B cell (primary cell): ENCODE measurements at regions of chr3 and their contacts with region 1.

Region 1: DNA sequence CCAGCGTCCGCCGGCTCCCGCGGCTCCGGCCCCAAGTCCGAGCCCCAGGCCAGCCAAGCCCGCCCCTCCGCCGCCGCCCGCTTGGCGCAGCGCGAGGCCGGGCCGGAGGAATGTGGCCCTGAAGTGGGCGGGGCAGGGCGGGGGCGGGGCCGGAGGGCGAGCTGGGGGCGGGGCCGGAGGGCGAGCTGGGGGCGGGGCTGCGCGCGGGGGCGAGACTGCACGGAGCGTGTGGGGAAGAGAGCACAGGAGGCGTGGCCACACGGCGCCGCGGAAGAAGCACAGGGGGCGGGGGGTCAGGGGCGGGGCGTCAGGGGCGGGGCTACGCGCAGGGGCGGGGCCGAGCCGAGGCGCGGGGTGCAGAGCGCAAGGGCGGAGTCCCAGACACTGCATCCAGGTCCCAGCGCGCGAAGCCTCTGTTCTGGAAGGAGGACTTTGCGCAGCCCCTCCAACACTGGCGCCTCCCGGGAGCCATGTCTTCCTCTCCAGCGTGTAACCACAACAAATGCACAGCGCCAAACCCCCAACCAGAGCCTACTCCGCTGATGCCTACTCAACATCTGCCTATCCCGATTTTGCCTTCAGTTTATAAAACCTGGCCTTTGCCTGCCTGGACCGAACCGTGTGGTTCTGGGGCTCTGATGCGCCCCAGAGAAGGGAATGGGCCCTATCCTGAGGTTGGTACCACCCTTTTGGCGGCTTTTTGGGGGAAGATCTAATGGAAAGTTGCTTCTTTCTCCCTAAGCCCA is 105.5 kb downstream of the IQSEC1 start:
- DNase-seq: peak; percentile 91
- ATAC-seq: peak; percentile 98
- H3K4me3 ChIP-seq: peak overlapping the region in 4 of 5 experiments; percentile 16 to 61 (median 44)
- H3K4me3 Mint-ChIP-seq: peak overlapping the region; percentile 86
- H3K27ac ChIP-seq: peak overlapping the region in 1 of 2 donors; percentile 11
- H3K27ac Mint-ChIP-seq: peak overlapping the region; percentile 85
- H3K4me1 ChIP-seq: peaks cover 55 to 78% of the 10 kb centered on the region in 2 donors
- H3K4me1 Mint-ChIP-seq: peaks cover 77% of the 10 kb centered on the region
- H3K27me3 ChIP-seq: no peaks in the 10 kb centered on the region
- H3K27me3 Mint-ChIP-seq: no peaks in the 10 kb centered on the region
- CTCF ChIP-seq: no peak

Region 2: DNA sequence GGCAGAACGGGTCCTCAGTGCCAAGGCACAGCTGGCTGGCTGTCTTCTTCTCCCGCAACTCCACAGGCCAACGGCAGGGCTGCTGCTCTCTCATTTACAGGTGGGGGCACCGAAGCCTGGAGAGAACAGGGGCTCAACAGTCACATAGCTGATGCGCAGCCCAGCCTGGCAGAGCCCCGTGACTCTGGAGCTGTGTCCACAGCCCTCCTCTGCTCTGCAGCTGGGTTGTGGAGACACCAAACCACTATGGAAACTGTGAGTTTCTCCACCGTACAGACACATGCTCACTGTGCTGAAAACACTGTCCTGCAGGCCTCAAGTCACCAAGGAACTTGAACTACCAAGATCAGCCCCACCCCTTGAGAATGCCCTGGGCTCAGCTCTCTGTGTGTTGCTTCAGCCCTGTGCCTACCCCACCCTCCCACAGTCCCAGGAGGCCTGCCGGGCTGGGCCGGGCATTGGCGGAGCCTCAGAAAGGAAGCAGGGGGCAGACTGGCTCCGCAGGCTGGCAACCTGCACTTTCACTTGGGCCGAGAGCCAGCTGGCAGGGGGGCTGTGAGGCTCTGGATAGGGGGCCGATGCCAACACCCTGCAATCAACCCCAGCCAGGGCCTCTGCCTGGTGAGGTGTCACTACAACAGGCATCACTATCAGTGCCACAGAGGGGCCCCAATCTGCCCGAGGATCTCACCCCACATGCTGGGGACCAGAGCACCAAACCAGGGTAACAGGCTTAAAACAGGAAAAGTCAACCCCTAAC is 12.7 kb before region 1 on chr3:
- CTCF ChIA-PET with region 1: interaction called, 9 read pairs
- POLR2A ChIA-PET with region 1: interaction called, 5 read pairs
- intact Hi-C with region 1: loop called (anchors 1 kb)
- DNase-seq: peak; percentile 87
- ATAC-seq: peak; percentile 96
- H3K4me3 ChIP-seq: peak overlapping the region in 3 of 5 experiments; percentile 20 to 40 (median 32)
- H3K4me3 Mint-ChIP-seq: peak overlapping the region; percentile 74
- H3K27ac ChIP-seq: peak overlapping the region; percentile 70 to 81
- H3K27ac Mint-ChIP-seq: peak overlapping the region; percentile 94
- H3K4me1 ChIP-seq: peaks cover 60 to 90% of the 10 kb centered on the region in 2 donors
- H3K4me1 Mint-ChIP-seq: peaks cover 80% of the 10 kb centered on the region
- H3K27me3 ChIP-seq: no peaks in the 10 kb centered on the region
- H3K27me3 Mint-ChIP-seq: no peaks in the 10 kb centered on the region
- CTCF ChIP-seq: peak; percentile 35